Activated CD8-positive, alpha-beta memory T cell treated with anti-CD3 and anti-CD28 coated beads, Interleukin-2, amount 10 ng/mL, durations not matched to agents 7 days and 5 days (primary cell): ENCODE measurements at regions of chr5 and their contacts with region 1.

Region 1: DNA sequence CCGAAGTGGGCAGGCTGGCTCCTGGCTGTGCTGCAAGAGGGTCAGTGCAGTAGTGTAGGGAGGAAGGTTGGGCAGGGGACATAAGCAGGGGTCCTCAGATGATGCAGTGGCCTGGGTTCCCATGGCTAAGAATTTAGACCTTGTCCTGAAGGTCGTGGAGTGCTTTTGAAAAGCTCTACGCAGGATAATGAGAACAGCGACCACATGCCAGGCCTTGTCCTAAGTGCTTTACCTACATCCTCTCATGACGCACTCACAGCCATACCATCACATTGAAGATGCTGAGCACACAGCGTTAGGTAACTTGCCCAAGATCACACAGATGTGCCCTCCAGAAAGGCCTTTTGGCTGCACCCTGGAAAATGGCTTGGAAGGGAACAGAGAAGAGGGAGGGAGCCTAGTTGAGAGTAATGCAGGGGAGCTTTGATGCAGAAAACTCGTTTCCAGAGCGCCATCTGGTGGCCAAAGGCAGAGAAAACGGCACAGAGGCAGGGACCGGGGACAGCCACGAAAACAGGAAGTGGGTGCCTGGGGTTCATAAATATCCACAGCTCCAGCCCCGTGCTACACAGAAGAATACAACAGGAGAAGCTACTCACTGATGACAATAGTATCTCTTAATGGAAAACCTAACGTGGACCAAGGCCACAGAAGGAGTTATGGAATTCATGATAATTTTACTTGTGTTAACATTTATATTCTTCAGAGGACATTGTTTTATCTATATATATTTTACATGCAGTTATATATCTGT is 2.6 kb upstream of the PCDH12 start:
- DNase-seq: peak; percentile 94
- ATAC-seq: peak; percentile 96
- H3K4me3 Mint-ChIP-seq: peak overlapping the region; percentile 29
- H3K27ac Mint-ChIP-seq: peak overlapping the region; percentile 79
- H3K4me1 Mint-ChIP-seq: peaks cover 45% of the 10 kb centered on the region
- H3K27me3 Mint-ChIP-seq: no peaks in the 10 kb centered on the region

Region 2: GRCh38 chr5:141650851-141651727 is 309.5 kb before region 1 on chr5 and contains the start of gene FCHSD1:
- CTCF ChIA-PET with region 1: interaction called, 14 read pairs
- DNase-seq: peak; percentile 92
- ATAC-seq: peak; percentile 98
- H3K4me3 Mint-ChIP-seq: peak within 1 kb of the TSS; percentile 93
- H3K27ac Mint-ChIP-seq: peak within 1 kb of the TSS; percentile 95
- H3K4me1 Mint-ChIP-seq: peaks cover 27% of the 10 kb centered on the region
- H3K27me3 Mint-ChIP-seq: no peaks in the 10 kb centered on the region
- total RNA-seq, gene FCHSD1: 46.5 to 64.1 TPM

Region 3: DNA sequence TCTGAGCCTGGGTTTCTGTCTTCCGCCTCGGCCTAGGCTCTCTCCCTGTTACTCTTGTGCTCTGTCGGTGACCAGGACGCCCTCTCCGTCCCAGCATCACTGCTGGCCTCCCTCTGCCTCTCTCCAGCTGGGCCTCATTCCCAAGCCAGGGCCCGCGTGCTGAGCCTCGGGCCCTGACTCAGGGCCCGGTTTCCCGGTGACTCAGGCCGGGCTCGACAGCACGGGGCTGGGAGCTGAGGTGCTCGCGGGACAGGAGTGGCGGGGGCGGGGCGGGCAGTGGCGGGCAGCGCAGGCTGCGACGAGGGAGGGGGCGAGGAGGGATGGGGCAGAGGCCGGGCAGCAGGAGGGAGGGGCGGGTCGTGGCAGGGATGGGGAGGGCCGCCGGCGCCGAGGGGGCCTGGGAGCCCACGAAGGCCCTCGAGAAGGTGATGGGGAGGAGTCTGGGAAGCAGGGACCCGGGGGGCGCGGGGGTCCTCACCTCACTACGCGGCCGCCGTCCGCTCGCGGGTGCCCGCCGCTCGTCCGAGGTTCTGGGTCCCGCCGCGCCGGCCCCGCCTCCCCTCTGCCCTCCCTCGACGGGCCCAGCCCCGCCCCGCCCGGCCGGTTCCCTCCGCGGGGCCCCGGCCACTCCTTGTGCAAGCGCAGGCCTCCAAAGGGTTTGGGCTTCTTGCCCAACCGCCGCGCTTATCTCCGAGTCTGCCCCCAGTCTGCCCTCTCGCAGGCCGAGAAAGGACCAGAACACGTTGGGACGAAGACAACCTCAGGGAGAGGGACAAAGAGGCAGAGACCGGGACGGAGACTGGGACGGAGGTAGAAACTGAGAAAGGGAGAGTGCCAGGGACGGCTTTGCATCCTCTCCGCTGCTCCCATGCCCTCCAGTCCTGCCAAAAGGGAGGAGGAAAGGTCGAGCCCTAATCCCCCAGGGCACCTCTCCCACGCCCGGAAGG is 278.7 kb before region 1 on chr5 and contains the start of gene ARAP3:
- CTCF ChIA-PET with region 1: interaction called, 27 read pairs
- DNase-seq: peak; percentile 62
- ATAC-seq: peak; percentile 88
- H3K4me3 Mint-ChIP-seq: peak within 1 kb of the TSS; percentile 75
- H3K27ac Mint-ChIP-seq: peak within 1 kb of the TSS; percentile 73
- H3K4me1 Mint-ChIP-seq: peaks cover 30% of the 10 kb centered on the region
- H3K27me3 Mint-ChIP-seq: no peaks in the 10 kb centered on the region
- total RNA-seq, gene ARAP3: 9.9 to 11.0 TPM

Region 4: DNA sequence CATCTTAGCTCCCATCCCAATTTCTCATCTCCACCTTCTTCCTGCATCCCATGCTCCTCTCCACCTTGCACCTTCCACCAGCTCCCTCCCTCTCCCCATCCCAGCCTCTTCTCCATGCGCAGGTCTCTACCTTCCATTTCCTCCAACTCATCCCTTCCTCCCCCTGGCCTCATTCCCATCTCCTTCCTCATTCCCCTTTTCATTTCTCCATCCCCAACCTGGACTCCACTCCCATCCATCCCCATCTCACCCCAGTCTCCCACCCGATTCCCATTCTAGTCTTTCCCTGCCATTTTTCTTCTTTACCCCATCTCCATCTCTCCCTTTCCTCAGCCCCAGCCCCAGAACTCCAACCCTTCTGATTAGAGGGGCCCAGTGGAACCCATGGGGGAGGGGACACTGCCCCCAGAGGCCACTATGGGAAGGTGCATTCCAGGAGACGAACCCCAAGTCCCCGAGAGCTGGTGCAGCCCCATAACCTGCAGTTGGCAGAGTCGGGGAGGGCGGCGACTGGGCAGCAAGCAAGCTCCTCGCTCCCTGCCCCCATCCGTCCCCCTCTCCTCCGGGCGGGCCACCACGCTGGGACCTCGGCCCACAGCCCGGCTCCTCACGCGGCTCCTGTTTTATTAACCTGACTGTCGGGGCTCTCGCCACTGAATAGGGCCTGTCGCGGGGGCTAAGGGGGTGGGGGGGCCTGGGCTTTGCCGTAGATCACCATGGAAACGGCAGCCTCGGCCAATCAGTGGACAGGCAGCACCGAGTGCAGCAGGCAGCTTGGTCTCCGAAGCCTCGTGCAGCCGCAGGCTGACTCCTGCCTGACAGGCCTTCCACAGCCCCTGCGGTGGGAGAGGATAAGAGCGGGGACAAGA is 149.1 kb before region 1 on chr5:
- CTCF ChIA-PET with region 1: interaction called, 16 read pairs
- DNase-seq: peak; percentile 49
- ATAC-seq: peak; percentile 75
- H3K4me3 Mint-ChIP-seq: no peak overlapping the region
- H3K27ac Mint-ChIP-seq: no peak overlapping the region
- H3K4me1 Mint-ChIP-seq: peaks cover 5% of the 10 kb centered on the region
- H3K27me3 Mint-ChIP-seq: peaks cover 64% of the 10 kb centered on the region

Region 5: DNA sequence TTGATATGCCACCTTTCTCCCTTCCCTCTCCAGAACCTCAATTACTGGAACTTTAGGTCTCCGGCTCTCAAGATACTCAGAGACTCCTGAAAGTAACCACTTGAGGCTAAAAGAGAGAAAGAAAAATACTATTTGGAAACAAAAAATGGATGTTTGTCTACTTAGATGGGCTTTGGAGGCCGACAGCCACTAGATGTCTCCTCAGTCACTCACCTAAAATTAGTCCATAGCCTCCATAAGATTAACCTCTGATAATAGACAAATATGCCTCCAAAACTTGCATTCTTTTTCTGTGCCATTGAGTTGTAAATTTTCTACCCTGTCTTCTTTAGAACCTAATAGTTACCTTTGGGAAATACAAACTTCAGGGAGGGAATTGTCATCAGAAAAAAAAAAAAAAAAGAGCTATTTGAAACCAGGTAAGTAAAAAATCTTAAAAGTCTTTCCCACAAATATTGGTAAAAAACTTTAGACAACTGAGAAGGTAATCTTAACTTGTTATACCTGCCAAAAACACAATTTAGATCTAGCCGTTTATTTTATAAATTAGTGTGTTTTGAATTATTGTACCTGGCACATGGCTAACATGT is 71.2 kb before region 1 on chr5:
- CTCF ChIA-PET with region 1: interaction called, 50 read pairs
- DNase-seq: no peak
- ATAC-seq: no peak
- H3K4me3 Mint-ChIP-seq: no peak overlapping the region
- H3K27ac Mint-ChIP-seq: no peak overlapping the region
- H3K4me1 Mint-ChIP-seq: no peaks in the 10 kb centered on the region
- H3K27me3 Mint-ChIP-seq: peaks cover 43% of the 10 kb centered on the region

Region 6: DNA sequence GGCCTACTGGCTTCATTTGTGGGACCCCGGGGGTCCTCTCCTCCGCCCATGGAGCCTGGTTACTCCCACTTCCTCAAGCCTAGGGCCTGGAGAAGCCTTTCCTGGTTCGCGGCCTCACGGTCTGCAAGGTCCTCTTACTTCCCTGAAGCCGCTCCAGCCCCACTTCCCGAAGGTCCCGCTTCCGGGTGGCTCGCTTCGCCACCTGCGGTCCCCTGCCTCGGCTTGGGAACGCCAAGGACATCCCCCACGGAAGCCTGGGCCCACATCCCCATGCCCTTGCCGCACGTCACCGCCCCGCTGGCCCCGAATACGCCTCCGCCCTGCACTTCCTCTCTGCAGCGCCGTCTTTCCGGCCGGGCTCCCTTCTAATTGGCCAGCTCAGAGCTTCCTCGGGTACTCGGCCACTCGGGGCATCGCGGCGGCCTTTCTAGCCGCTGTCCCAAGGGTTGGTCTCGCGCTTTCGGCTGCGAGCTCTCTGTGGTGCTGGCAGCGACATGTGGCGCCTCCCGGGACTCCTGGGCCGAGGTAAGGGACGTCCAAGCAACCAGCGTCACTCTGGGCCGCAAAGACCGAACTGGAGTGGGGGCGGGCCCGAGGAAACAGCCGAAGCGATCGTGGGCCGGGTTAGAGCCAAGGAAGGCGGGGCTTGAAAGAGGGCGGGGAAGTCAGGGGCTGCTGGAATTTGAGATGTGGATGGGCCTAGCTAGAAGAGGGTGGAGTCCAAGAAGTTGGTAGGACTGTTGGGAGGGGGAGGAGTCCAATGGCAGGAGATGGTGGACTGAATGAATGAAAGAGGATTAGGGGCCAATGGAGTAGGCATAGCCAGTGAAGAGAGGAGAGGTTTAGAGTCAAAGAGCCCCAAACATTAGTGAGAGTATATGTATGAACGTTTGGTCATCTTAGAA is 36.9 kb before region 1 on chr5 and contains the start of gene DELE1:
- CTCF ChIA-PET with region 1: interaction called, 45 read pairs
- DNase-seq: peak; percentile 96
- ATAC-seq: peak; percentile 98
- H3K4me3 Mint-ChIP-seq: peak within 1 kb of the TSS; percentile 85
- H3K27ac Mint-ChIP-seq: peak within 1 kb of the TSS; percentile 91
- H3K4me1 Mint-ChIP-seq: peaks cover 26% of the 10 kb centered on the region
- H3K27me3 Mint-ChIP-seq: no peaks in the 10 kb centered on the region
- total RNA-seq, gene DELE1: 65.4 to 68.7 TPM

Region 7: GRCh38 chr5:141976176-141976575 is 15.6 kb after region 1 on chr5:
- CTCF ChIA-PET with region 1: interaction called, 95 read pairs
- DNase-seq: no peak
- ATAC-seq: no peak
- H3K4me3 Mint-ChIP-seq: no peak overlapping the region
- H3K27ac Mint-ChIP-seq: no peak overlapping the region
- H3K4me1 Mint-ChIP-seq: peaks cover 16% of the 10 kb centered on the region
- H3K27me3 Mint-ChIP-seq: no peaks in the 10 kb centered on the region